ENCODE measurements at regions of chr2 and their contacts with region 1.

Region 1: DNA sequence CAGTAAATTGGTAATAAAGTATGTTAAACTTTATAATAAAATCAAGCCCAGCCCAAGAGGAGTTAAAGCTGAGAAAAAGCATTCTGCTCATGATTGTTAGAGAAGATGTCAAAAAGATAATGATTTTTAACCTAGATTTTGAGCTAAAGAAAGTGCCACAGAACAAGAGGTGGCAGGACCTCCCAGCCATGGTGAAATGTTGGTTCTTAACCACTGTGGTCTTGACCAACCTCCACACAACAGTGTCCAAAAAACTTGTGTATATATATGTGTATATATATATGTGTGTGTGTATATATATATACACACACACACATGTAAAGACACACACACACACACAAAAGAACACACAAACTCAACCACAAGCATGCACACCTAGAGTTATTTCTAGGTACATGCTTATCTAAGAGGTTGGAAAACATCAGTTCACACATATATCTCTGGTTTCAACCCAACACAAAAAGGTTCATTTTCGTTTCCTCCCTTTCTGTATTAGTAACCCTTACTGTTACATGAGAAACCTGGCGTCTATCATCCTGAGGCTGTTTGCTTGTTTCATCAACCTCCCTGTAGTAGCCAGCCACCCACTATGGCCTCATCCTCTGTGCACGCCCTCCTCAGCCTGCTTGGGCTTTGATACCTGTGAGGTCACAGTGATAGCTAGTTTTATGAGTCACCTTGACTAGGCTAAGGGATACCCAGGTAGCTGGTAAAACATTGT is 631.8 kb upstream of the ID2 start:
- DNase-seq: peak; percentile 87
- ATAC-seq: peak; percentile 97
- H3K4me3 Mint-ChIP-seq: peak overlapping the region; percentile 30
- H3K27ac Mint-ChIP-seq: peak overlapping the region; percentile 88
- H3K4me1 Mint-ChIP-seq: peaks cover 34% of the 10 kb centered on the region
- H3K27me3 Mint-ChIP-seq: peaks cover 5% of the 10 kb centered on the region

Region 2: DNA sequence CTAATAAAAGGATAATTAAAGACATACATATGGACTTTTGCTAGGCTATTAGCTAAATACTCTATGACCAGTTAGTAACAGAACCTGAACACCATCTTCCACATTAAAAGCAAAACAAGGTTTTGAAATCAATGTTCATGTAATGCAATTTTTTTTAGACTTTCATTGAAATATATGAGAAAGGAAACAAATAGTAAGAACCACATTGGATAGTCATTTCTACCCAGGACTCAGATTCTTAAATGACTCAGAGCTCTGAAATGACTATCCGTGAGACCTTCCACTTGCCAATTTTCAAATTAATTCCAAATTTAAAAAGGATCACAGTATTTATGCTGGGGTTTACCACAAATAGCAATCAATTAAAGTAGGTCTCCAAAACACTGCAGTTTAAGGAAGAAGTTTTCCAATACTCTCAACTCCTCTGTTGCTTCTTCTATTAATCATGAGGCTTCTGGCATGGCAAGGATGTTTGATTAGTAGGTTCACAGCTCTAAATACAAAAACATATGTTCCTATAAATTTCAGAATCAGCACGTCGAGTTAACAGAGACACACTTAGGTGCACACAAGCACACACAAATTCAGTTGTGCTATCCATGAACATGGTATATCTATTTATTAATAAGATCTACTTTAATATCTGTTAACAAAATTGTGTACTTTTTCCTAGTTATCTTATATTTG is 291.8 kb before region 1 on chr2:
- CTCF ChIA-PET with region 1: no interaction called
- POLR2A ChIA-PET with region 1: no interaction called
- intact Hi-C with region 1: loop called in 1 of 2 experiments (anchors 5 kb)
- DNase-seq: no peak
- ATAC-seq: peak; percentile 82
- H3K4me3 Mint-ChIP-seq: no peak overlapping the region
- H3K27ac Mint-ChIP-seq: peak overlapping the region; percentile 62
- H3K4me1 Mint-ChIP-seq: peaks cover 16% of the 10 kb centered on the region
- H3K27me3 Mint-ChIP-seq: peaks cover 14% of the 10 kb centered on the region

Region 3: GRCh38 chr2:7825591-7826312 is 224.3 kb before region 1 on chr2:
- CTCF ChIA-PET with region 1: no interaction called
- POLR2A ChIA-PET with region 1: no interaction called
- intact Hi-C with region 1: loop called in 1 of 2 experiments (anchors 1 kb)
- DNase-seq: peak; percentile 86
- ATAC-seq: peak; percentile 95
- H3K4me3 Mint-ChIP-seq: peak overlapping the region; percentile 26
- H3K27ac Mint-ChIP-seq: peak overlapping the region; percentile 93
- H3K4me1 Mint-ChIP-seq: peaks cover 27% of the 10 kb centered on the region
- H3K27me3 Mint-ChIP-seq: peaks cover 3% of the 10 kb centered on the region

Region 4: DNA sequence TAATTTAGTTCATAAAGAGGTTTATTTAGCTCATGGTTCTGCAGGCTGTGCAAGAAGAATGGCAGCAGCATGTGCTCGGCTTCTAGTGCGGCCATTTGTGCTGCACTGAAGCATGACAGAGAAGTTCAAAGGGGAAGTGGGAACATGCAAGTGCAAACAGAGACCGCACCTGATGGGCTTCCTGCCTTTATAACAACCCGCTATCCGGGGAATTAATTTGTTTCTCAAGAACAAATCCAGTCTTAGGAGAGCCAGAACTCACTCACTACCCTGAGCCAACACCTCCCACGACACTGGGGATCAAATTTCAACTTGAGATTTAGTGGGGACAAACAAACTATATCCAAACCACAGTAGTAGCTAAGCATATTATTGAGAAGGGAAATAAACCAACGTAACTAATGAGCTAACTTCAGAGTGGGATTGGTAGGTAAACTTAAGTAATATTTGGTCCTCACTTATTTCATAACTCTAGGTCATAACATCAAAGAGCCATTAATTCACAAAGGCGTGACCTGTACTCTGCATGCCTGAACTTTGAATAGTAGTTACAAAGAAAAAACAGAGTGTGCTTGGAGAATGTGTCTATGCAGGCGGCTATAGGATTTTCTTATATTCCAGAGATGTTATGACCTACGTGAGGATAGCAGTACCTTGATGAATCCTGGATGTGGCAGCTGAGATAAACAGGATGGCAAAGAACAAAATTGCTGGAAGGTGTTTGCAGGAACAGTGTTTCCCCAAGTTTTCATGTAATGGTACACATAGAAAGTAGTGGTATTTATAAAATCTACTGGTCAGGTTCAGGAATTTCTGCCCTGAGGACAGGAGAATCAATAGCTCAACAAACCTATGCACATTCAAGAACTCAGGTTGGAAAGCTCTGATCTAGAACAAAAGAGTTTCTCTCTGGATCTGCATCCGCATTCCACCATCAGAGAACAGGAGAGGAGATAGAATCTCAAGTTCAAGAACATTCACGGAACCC is 214.0 kb before region 1 on chr2:
- CTCF ChIA-PET with region 1: no interaction called
- POLR2A ChIA-PET with region 1: no interaction called
- intact Hi-C with region 1: no loop called
- DNase-seq: no peak
- ATAC-seq: no peak
- H3K4me3 Mint-ChIP-seq: no peak overlapping the region
- H3K27ac Mint-ChIP-seq: no peak overlapping the region
- H3K4me1 Mint-ChIP-seq: peaks cover 13% of the 10 kb centered on the region
- H3K27me3 Mint-ChIP-seq: no peaks in the 10 kb centered on the region

Region 5: DNA sequence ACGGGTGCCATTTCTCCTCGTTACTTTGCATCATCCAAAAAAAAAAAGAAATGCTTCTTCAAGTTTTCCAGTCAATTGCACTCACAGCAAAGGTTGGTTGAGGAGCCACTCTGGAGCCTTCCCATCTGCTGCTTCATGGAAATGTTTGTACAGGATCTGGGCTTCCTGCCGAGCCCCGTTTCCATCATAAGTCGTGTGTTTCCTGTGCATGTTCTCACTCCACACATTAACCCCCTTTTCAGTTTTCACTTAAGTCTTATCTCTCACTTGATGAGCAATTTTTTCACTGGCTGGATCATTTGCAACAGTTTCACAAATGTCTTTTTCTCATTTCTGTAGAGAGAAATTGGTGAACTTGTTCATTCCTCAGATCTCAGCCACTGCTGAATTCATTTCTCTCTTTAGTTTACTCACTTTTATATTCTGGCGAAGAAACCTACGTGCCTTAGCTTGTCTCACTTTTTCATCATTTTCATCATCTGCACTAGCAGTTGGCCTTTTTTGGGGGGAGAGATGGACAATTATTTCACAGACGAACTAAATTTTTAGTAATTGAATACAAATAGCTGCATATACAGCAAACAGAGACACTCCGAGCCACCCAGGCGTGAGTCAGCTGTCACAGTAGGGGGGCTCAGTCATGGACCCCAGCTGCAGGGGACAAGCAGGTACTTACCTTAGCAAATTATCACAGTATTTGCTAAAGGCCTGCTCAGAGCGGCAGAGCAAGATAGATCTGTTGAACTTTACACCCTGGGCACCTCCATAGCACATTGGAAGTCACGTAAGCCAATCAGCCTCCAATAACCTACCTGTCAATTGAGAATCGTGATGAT is 119.0 kb before region 1 on chr2:
- CTCF ChIA-PET with region 1: no interaction called
- POLR2A ChIA-PET with region 1: no interaction called
- intact Hi-C with region 1: loop called (anchors 2 kb)
- DNase-seq: peak; percentile 56
- ATAC-seq: peak; percentile 80
- H3K4me3 Mint-ChIP-seq: peak overlapping the region; percentile 0
- H3K27ac Mint-ChIP-seq: peak overlapping the region; percentile 93
- H3K4me1 Mint-ChIP-seq: peaks cover 33% of the 10 kb centered on the region
- H3K27me3 Mint-ChIP-seq: no peaks in the 10 kb centered on the region

Region 6: DNA sequence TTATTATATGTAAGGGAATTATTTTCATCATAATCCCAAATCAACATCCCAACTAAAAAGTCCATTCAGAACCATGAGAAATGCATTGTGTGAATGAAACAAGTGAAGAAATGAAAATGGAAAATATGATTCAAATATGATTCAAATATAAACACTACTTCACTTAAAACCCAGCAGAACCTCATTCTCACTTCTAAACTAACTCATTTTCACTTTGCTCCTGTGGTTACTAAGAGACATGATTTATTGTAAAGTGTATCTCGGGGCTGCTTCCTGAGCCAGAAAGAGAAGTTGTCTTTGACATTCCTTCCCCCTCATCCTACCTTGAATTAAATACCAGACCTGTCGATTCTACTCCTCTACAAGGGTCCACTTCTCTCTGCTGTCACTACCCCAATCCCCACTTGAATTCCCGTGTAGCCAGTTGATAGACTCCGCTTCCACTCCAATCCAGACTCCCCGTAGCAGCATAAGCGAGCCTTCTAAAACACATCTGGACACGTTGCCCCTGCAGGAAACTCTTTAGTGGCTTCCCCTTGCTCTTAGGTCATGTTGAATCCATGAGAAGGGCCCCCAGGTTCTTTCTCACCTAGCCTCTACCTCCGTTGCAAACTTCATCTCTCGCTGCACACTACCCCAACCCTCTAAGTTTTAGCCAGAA is 65.2 kb before region 1 on chr2:
- CTCF ChIA-PET with region 1: no interaction called
- POLR2A ChIA-PET with region 1: no interaction called
- intact Hi-C with region 1: loop called in 1 of 2 experiments (anchors 1 kb)
- DNase-seq: no peak
- ATAC-seq: peak; percentile 96
- H3K4me3 Mint-ChIP-seq: peak overlapping the region; percentile 44
- H3K27ac Mint-ChIP-seq: peak overlapping the region; percentile 95
- H3K4me1 Mint-ChIP-seq: peaks cover 33% of the 10 kb centered on the region
- H3K27me3 Mint-ChIP-seq: no peaks in the 10 kb centered on the region

Region 7: GRCh38 chr2:8152392-8153257 is 102.6 kb after region 1 on chr2:
- CTCF ChIA-PET with region 1: no interaction called
- POLR2A ChIA-PET with region 1: no interaction called
- intact Hi-C with region 1: loop called (anchors 1 to 2 kb)
- DNase-seq: no peak
- ATAC-seq: no peak
- H3K4me3 Mint-ChIP-seq: no peak overlapping the region
- H3K27ac Mint-ChIP-seq: no peak overlapping the region
- H3K4me1 Mint-ChIP-seq: peaks cover 30% of the 10 kb centered on the region
- H3K27me3 Mint-ChIP-seq: no peaks in the 10 kb centered on the region

Region 8: DNA sequence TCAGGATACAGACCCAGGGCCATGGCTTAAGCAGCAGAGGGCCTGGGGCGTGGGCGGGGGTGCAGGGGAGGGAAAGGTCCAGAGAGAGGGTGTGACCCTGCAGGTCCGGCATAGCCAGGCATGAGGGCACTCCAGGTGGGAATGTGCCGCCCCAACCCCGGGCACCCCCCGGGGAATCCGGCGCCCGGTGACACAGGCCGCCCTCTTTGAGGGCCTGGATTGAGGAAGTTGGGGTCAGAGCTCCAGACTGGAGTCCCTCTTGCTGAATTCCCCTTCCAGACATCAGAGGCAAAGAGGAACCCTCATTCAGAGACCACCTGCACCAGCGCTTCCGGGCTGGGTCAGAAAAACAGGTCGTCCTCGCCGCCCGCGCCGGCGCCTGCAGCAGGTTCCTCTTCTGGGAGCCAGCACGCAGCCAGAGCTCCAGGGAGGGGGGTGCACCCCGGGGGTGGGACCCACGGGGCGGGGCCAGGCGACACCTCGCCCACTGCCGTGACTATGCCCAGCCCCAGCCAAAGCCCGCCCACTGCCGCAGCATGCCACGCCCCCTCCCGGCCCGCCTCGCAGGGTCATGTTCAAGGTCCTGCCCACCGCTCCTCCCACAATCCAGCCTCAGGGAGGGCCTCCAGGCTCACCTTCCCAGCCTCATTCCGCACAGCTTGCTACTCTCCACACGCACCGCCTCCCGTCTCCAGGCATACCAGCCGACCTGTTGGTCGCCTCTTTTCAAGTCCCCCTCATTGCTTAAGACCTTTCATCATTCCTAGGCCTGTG is 533.6 kb after region 1 on chr2:
- CTCF ChIA-PET with region 1: no interaction called
- POLR2A ChIA-PET with region 1: no interaction called
- intact Hi-C with region 1: loop called in 1 of 2 experiments (anchors 5 kb)
- DNase-seq: peak; percentile 91
- ATAC-seq: peak; percentile 69
- H3K4me3 Mint-ChIP-seq: peak overlapping the region; percentile 24
- H3K27ac Mint-ChIP-seq: no peak overlapping the region
- H3K4me1 Mint-ChIP-seq: peaks cover 56% of the 10 kb centered on the region
- H3K27me3 Mint-ChIP-seq: peaks cover 5% of the 10 kb centered on the region